WTC11 (cell line): ENCODE measurements at regions of chr3 and their contacts with region 1.

Region 1: GRCh38 chr3:42502429-42503250 is at the start of gene VIPR1:
- DNase-seq: peak; percentile 95
- ATAC-seq: peak; percentile 92
- H3K4me3 Mint-ChIP-seq: peak within 1 kb of the TSS; percentile 88
- H3K27ac Mint-ChIP-seq: no peak within 1 kb of the TSS
- H3K4me1 Mint-ChIP-seq: peaks cover 41% of the 10 kb centered on the region
- H3K27me3 Mint-ChIP-seq: peaks cover 63% of the 10 kb centered on the region
- CTCF ChIP-seq: no peak
- total RNA-seq, gene VIPR1: 7.1 to 9.4 TPM (median 7.2 TPM) in 3 replicates

Region 2: DNA sequence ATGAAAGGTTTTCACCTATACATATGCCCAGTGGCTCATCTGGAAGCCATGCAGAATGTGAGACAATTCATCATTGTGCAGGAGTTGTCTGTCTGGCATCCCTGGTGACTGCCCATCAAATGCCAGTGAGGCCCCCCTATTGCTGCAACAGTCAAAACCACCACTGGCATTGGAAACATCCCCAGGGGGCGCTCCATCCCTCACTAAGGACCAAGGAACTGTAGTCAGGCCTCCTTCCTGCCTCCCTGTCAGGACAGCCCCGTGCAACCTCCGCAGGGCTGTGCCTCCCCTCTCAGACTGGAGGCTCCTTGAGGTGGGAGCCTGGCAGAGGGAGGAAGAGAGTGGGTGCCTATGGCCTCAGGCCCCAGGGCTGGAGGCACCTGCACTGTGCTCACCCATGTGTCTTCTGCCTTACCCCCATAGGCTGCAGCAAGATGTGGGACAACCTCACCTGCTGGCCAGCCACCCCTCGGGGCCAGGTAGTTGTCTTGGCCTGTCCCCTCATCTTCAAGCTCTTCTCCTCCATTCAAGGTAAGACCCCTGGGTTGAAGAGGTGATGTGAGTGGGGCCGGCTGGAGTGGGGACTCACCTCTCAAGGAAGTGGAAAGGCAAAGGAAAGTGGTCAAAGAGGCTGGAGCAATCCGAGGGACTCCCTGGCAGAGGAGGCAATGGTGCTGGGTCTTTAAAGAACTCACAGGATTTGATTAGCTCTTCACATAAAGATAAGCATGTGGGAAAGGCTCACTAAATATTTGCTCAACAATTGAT is 16.3 kb after region 1 on chr3:
- CTCF ChIA-PET with region 1: no interaction called
- POLR2A ChIA-PET with region 1: no interaction called
- DNase-seq: peak; percentile 80
- ATAC-seq: peak; percentile 85
- H3K4me3 Mint-ChIP-seq: no peak overlapping the region
- H3K27ac Mint-ChIP-seq: no peak overlapping the region
- H3K4me1 Mint-ChIP-seq: 0 out of 2 replicates have a peak, but pooled peaks cover 2% of the 10 kb centered on the region
- H3K27me3 Mint-ChIP-seq: no peaks in the 10 kb centered on the region
- CTCF ChIP-seq: peak; percentile 54

Region 3: DNA sequence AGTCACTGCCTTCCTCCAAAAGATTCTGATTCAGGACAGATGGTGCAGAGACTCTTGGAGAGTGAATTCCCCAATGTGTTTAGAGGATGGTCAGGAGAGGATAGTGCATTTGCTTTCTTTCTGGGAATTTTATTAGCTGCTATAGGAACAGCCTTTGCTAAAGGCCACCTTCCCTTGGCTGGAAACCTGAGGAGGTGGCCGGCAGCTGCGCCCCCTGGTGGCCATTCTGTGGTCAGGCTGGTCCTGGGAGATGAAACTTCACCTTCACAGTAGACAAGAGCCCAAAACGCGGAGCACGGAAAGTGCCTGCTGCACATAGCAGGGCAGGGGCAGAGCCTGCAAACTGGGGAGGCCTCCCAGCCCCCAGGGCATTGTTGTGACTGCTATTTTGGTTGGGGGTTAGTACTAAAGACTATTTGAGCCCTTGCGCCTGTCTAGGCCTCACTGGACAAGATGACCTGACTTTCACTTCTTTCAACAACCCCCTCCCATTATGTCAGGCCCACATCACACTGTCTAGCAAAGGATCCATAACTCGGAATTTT is 44.8 kb after region 1 on chr3:
- CTCF ChIA-PET with region 1: interaction called, 42 read pairs
- POLR2A ChIA-PET with region 1: interaction called, 3 read pairs
- DNase-seq: peak; percentile 83
- ATAC-seq: peak; percentile 91
- H3K4me3 Mint-ChIP-seq: no peak overlapping the region
- H3K27ac Mint-ChIP-seq: no peak overlapping the region
- H3K4me1 Mint-ChIP-seq: peaks cover 3% of the 10 kb centered on the region; the same call in 1 of the 2 replicates
- H3K27me3 Mint-ChIP-seq: no peaks in the 10 kb centered on the region
- CTCF ChIP-seq: peak; percentile 98

Region 4: GRCh38 chr3:42647821-42648459 is 145.3 kb after region 1 on chr3:
- CTCF ChIA-PET with region 1: no interaction called
- POLR2A ChIA-PET with region 1: no interaction called
- DNase-seq: no peak
- ATAC-seq: peak; percentile 50
- H3K4me3 Mint-ChIP-seq: no peak overlapping the region
- H3K27ac Mint-ChIP-seq: peak overlapping the region; percentile 89
- H3K4me1 Mint-ChIP-seq: peaks cover 35% of the 10 kb centered on the region
- H3K27me3 Mint-ChIP-seq: no peaks in the 10 kb centered on the region
- CTCF ChIP-seq: no peak